ENCODE measurements at regions of chr13 and their contacts with region 1.

Region 1: GRCh38 chr13:114339857-114340534 is 25.7 kb downstream of the CHAMP1 start:
- DNase-seq: no peak
- H3K4me3 ChIP-seq: no peak overlapping the region
- H3K27me3 ChIP-seq: no peaks in the 10 kb centered on the region
- CTCF ChIP-seq: peak; percentile 75

Region 2: GRCh38 chr13:113647351-113648215 is 692.4 kb before region 1 on chr13:
- CTCF ChIA-PET with region 1: no interaction called
- POLR2A ChIA-PET with region 1: no interaction called
- DNase-seq: no peak
- H3K4me3 ChIP-seq: no peak overlapping the region
- H3K27me3 ChIP-seq: no peaks in the 10 kb centered on the region
- CTCF ChIP-seq: no peak

Region 3: DNA sequence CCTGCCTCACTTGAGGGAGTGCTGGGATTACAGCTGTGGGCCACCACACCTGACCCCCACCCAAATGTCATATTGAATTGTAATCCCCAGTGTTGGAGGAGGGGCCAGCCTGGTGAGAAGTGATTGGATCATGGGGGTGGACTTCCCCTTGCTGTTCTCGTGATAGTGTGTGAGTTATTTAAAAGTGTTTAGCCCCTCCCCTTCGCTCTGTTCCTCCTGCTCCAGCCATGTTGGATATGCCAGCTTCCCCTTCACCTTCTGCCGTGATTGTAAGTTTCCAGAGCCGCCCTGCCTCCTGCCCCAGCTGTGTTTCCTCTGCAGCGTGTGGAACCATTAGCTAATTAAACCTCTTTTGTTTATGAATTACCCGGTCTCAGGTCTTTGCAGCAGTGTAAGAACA is 12.0 kb before region 1 on chr13:
- CTCF ChIA-PET with region 1: interaction called, 16 read pairs
- POLR2A ChIA-PET with region 1: no interaction called
- DNase-seq: no peak
- H3K4me3 ChIP-seq: no peak overlapping the region
- H3K27me3 ChIP-seq: no peaks in the 10 kb centered on the region
- CTCF ChIP-seq: no peak